ENCODE measurements at regions of chr2 and their contacts with region 1.

Region 1: DNA sequence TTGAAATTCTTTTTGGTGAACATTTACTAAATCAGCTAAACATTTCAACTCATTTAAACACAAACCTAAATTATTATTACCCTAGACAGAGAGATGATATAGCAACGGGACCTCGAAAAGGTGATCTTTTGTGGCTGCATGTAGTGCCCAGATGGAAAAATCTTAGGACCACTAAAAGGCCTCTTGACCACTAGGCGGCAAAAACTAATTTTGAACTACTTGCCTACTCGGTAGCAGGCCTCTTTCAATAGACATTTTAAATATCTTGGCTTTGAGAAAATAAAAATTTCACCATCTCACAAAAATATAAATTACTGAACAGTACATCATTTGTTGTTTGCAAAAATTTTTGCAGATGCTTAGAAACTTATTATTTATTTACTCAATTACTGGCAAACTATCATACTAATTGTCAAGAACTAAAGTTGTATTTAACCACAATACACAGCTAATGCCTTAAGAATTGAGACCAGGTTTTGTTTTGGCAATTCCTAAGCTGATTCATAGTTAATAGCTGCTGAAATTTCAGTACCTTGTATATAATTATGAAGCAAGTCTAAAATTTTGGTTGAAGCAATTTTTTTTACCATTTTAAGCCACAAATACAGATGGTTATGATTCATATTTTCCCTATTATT is 9.4 kb downstream of the COL3A1 start:
- DNase-seq: no peak
- H3K4me3 Mint-ChIP-seq: no peak overlapping the region
- H3K27ac Mint-ChIP-seq: no peak overlapping the region
- H3K4me1 Mint-ChIP-seq: peaks cover 13% of the 10 kb centered on the region
- H3K27me3 Mint-ChIP-seq: peaks cover 5% of the 10 kb centered on the region

Region 2: GRCh38 chr2:188519136-188519535 is 464.4 kb before region 1 on chr2:
- CTCF ChIA-PET with region 1: interaction called, 6 read pairs
- intact Hi-C with region 1: loop called (anchors 1 kb)
- DNase-seq: no peak
- H3K4me3 Mint-ChIP-seq: no peak overlapping the region
- H3K27ac Mint-ChIP-seq: no peak overlapping the region
- H3K4me1 Mint-ChIP-seq: no peaks in the 10 kb centered on the region
- H3K27me3 Mint-ChIP-seq: peaks cover 2% of the 10 kb centered on the region

Region 3: GRCh38 chr2:188524519-188525113 is 458.9 kb before region 1 on chr2:
- CTCF ChIA-PET with region 1: interaction called, 6 read pairs
- intact Hi-C with region 1: loop called (anchors 1 kb)
- DNase-seq: peak; percentile 35
- H3K4me3 Mint-ChIP-seq: no peak overlapping the region
- H3K27ac Mint-ChIP-seq: no peak overlapping the region
- H3K4me1 Mint-ChIP-seq: no peaks in the 10 kb centered on the region
- H3K27me3 Mint-ChIP-seq: peaks cover 2% of the 10 kb centered on the region

Region 4: GRCh38 chr2:188765522-188766470 is 217.8 kb before region 1 on chr2:
- CTCF ChIA-PET with region 1: no interaction called
- intact Hi-C with region 1: loop called (anchors 5 kb)
- DNase-seq: peak; percentile 18
- H3K4me3 Mint-ChIP-seq: no peak overlapping the region
- H3K27ac Mint-ChIP-seq: no peak overlapping the region
- H3K4me1 Mint-ChIP-seq: no peaks in the 10 kb centered on the region
- H3K27me3 Mint-ChIP-seq: no peaks in the 10 kb centered on the region

Region 5: DNA sequence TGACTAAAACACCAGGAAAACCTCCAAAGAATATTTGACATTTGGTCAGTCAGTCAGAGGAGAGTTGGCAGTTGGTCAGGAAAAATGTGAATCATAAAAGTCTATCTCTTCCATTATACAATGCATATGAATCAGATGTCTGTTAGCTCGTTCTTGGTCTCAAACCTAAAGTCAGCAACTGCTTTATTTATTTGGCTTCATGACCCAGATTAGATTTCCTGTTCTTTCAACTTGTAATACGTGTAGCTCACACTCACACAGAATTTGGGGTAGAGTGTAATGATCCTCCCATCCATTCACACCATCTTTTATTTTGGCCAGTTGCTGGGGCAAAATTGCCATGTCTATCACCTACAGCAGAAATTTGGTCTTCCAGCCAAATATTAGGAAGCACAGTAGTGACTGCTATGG is 277.9 kb after region 1 on chr2:
- CTCF ChIA-PET with region 1: no interaction called
- intact Hi-C with region 1: no loop called
- DNase-seq: no peak
- H3K4me3 Mint-ChIP-seq: no peak overlapping the region
- H3K27ac Mint-ChIP-seq: no peak overlapping the region
- H3K4me1 Mint-ChIP-seq: peaks cover 38% of the 10 kb centered on the region
- H3K27me3 Mint-ChIP-seq: no peaks in the 10 kb centered on the region

Region 6: GRCh38 chr2:189719571-189719970 is 736.0 kb after region 1 on chr2:
- CTCF ChIA-PET with region 1: no interaction called
- intact Hi-C with region 1: no loop called
- DNase-seq: no peak
- H3K4me3 Mint-ChIP-seq: no peak overlapping the region
- H3K27ac Mint-ChIP-seq: no peak overlapping the region
- H3K4me1 Mint-ChIP-seq: peaks cover 4% of the 10 kb centered on the region
- H3K27me3 Mint-ChIP-seq: no peaks in the 10 kb centered on the region

Measured in activated naive CD4-positive, alpha-beta T cell treated with anti-CD3 and anti-CD28 coated beads for 36 hours (primary cell).